Activated CD8-positive, alpha-beta memory T cell treated with anti-CD3 and anti-CD28 coated beads, Interleukin-2, amount 10 ng/mL, durations not matched to agents 7 days and 5 days (primary cell): ENCODE measurements at regions of chr11 and their contacts with region 1.

Region 1: GRCh38 chr11:117807482-117808327 is 10.7 kb upstream of the DSCAML1 start:
- DNase-seq: peak; percentile 85
- ATAC-seq: peak; percentile 70
- H3K4me3 Mint-ChIP-seq: no peak overlapping the region
- H3K27ac Mint-ChIP-seq: no peak overlapping the region
- H3K4me1 Mint-ChIP-seq: peaks cover 22% of the 10 kb centered on the region
- H3K27me3 Mint-ChIP-seq: peaks cover 2% of the 10 kb centered on the region

Region 2: DNA sequence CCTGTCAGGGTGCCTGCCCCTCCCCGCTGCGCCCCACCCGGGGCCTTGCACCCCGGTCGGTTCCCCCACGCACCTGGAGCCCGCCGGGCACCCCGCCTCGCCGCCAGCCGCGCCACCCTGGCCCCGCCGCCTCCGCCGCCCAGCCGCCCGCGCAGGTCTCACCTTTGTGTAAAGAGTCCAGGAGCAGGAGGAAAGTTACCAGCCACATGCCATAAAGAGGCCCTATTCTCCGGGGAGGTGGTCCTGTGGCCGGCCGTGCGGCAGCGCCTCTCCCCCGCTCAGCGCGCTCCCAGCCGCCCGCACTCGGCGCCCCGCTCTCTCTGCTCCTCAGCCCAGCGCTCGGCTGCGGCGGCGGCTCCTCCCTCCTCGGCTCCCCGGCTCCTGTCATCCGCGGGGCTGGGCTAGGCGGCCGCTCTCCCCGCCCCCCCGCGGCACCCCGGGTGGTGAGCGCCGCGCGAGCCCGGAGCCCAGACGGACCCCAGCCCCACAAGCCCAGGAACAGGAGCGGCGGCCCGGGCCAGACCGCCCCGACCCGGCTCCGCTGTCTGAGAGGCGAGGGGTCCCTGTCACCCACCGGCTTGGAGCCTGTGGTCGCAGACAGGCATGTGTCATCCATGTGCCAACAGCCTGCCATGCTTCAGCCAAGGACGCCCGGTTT is 10.7 kb before region 1 on chr11 and contains the start of gene DSCAML1:
- CTCF ChIA-PET with region 1: interaction called, 27 read pairs
- DNase-seq: no peak
- ATAC-seq: peak; percentile 89
- H3K4me3 Mint-ChIP-seq: no peak within 1 kb of the TSS
- H3K27ac Mint-ChIP-seq: no peak within 1 kb of the TSS
- H3K4me1 Mint-ChIP-seq: peaks cover 4% of the 10 kb centered on the region
- H3K27me3 Mint-ChIP-seq: peaks cover 68% of the 10 kb centered on the region
- total RNA-seq, gene DSCAML1: 0.42 to 1.4 TPM

Region 3: DNA sequence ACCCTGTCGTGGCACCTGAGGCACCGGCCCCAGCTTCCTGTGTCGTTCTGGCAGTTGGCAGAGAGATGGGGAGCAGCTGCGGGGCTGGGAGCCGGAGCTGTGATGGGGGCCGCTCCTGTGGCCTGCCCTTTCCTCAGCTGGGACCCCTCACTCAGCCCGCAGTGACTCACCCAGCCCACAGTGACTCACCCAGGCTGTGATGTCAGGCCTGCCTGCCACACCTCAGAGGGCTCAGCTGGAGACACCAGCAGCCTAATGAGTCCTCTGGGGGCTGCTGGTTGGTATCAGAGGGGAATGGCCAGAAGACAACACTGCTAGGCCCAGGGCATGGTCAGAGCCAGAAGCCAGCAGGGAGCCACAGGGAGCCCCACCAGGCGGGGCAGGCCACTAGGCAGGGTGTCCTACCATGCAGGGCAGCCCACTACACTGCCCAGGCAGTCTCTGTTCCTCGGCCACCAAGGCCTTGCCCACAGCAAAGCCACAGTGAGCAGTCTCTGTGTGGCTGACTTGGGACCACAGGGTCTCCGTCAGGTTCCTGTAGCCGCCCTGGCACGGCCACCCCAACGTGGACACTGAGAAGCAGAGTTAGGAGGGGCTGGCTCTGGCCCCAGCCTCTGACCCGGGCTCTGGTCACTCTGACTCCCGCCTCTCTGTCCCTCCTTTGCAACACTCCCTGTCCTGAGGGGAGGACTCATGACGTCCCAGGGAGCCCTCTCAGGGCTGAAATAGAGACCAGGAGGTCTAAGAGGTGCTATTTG is 21.1 kb after region 1 on chr11:
- CTCF ChIA-PET with region 1: interaction called, 343 read pairs
- DNase-seq: peak; percentile 96
- ATAC-seq: peak; percentile 94
- H3K4me3 Mint-ChIP-seq: no peak overlapping the region
- H3K27ac Mint-ChIP-seq: peak overlapping the region; percentile 85
- H3K4me1 Mint-ChIP-seq: peaks cover 72% of the 10 kb centered on the region
- H3K27me3 Mint-ChIP-seq: no peaks in the 10 kb centered on the region

Region 4: DNA sequence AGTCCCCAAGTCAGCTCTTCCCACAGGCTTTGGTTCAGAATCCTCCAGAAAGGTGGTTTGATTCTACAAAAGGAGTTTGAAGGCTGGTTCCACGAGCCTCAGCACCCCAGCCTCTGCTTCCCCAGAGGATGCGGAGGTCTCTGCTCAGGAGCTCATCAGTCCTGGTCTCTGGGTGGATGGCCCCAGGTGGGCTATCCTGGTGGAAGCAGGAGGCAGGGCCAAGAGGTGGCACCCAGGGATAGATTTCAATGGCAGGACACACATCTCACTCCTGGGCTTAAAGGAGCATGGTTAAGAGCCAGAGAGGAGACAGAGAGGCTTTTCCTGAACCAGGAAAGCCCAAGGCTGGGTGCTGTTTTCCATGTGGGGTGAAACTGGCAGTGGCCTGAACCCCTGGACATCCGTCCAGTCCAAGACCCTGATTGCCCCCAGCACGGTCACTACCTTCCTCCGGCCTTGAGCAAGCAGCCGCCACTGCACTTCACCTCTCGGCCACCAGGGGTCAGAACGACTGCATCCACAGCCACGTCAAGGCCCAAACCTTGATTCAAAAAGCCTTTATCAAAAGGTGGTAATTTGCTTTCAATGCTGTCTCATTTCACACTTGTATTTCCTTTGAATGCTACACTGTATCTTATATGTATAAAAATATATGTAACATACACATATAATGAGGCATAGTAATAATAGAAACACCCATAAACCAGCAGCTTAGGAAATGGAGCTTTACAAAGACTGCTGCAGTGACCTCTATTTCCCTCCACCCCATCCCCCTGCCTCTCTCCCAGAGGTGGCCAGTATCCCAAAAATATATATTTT is 36.2 kb after region 1 on chr11:
- CTCF ChIA-PET with region 1: interaction called, 14 read pairs
- DNase-seq: peak; percentile 87
- ATAC-seq: peak; percentile 86
- H3K4me3 Mint-ChIP-seq: no peak overlapping the region
- H3K27ac Mint-ChIP-seq: no peak overlapping the region
- H3K4me1 Mint-ChIP-seq: peaks cover 7% of the 10 kb centered on the region
- H3K27me3 Mint-ChIP-seq: peaks cover 14% of the 10 kb centered on the region

Region 5: DNA sequence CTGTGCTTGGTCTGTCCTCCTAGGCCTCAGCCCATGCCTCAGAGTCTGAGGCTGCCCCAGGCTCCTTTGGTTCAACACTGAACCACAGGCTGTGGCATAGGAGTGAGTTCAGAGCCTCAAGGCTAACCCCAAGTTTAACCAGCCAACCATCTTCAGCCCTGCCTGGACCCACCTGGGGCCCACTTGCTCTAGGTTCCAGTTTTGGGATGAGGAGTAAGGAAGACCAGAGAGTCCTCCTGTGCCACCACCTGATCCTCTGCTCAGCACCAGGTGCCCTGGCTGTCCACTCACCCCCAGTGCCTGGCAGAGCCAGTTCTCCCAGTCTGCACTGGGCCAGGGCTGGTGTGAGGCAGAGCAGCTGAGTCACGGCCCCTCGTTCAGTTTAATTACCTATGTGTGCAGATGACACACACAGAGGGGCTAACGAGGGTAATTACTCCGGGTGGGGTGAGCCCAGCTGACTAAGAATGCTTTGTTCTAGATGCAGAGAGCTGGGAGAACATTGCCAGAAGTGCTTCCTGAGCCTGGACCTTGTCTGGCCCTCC is 133.5 kb after region 1 on chr11:
- CTCF ChIA-PET with region 1: interaction called, 90 read pairs
- DNase-seq: no peak
- ATAC-seq: peak; percentile 33
- H3K4me3 Mint-ChIP-seq: no peak overlapping the region
- H3K27ac Mint-ChIP-seq: no peak overlapping the region
- H3K4me1 Mint-ChIP-seq: peaks cover 49% of the 10 kb centered on the region
- H3K27me3 Mint-ChIP-seq: no peaks in the 10 kb centered on the region